ENCODE measurements at regions of chr5 and their contacts with region 1.

Region 1: DNA sequence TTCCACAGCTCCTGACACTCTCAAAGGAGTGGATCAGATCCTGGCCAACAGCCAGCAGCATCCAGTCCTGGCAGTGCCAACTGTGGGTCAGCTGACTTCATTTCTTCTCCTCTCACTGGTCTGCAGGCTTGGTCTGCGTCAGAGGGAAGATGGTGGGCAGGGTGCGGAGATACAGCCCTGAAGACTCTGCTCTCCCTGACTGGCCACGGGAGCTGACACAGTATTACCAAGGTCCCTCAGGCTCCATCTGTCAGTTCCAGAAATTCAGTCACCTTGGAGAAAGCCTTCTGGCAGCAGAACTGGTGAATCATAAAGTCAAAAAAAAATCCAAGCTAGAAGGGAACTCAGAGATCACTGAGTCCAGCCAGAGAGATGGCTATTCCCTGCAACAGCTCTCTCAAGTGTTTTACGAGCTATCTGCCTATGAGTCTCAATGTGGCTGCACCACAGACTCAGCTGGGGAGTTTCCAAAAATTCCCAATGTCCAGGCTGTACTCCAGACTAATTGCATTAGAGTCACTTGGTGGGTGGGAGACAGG is 28.0 kb downstream of the C1QTNF2 start:
- DNase-seq: no peak
- ATAC-seq: peak; percentile 25
- H3K4me3 ChIP-seq: no peak overlapping the region
- H3K4me1 ChIP-seq: peaks cover 5% of the 10 kb centered on the region
- CTCF ChIP-seq: no peak

Region 2: DNA sequence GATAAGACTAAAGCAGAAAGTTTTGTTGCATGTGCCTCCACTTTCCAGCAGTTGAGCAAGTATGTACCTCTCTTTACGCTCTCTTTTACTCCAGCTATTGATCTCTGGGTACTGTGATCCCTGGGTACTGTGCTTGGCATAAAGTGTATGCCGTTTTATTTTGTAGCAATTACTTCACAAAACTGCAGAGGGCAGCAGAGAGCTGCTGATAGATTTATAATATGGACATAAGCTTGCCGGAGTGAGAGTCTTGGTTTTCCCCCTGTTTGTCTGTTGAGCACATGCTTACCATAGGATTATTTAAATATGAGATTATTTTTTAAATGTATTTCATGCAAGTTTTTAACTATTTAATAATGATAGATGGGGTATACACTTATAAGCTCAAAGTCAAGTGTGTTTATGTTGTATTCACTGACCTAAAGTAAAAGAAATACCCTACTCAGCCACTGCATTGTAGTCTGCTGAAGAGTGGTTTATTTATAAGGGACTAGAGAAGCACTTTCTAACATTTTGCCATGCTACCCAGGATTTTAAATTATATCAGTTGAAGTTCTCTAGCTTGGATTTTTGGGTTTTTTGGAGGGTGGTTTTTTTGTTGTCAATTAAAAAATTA is 320.5 kb before region 1 on chr5:
- intact Hi-C with region 1: loop called (anchors 2 to 10 kb)
- DNase-seq: peak in 1 of 3 donors; percentile 74
- ATAC-seq: peak; percentile 93
- H3K4me3 ChIP-seq: no peak overlapping the region
- H3K4me1 ChIP-seq: peaks cover 21% of the 10 kb centered on the region
- CTCF ChIP-seq: peak; percentile 69

Region 3: GRCh38 chr5:160165137-160166068 is 177.1 kb before region 1 on chr5:
- intact Hi-C with region 1: no loop called
- DNase-seq: peak; percentile 74 to 88 (median 80)
- ATAC-seq: peak; percentile 86
- H3K4me3 ChIP-seq: no peak overlapping the region
- H3K4me1 ChIP-seq: peaks cover 12% of the 10 kb centered on the region
- CTCF ChIP-seq: no peak

Region 4: GRCh38 chr5:160199410-160199911 is 143.0 kb before region 1 on chr5:
- intact Hi-C with region 1: loop called (anchors 2 to 5 kb)
- DNase-seq: peak; percentile 70 to 87 (median 84)
- ATAC-seq: peak; percentile 99
- H3K4me3 ChIP-seq: no peak overlapping the region
- H3K4me1 ChIP-seq: no peaks in the 10 kb centered on the region
- CTCF ChIP-seq: peak; percentile 95

Region 5: GRCh38 chr5:160399402-160400353 is 57.2 kb after region 1 on chr5 and contains the start of gene FAM200C:
- intact Hi-C with region 1: no loop called
- DNase-seq: peak; percentile 87 to 94 (median 92)
- ATAC-seq: peak; percentile 99
- H3K4me3 ChIP-seq: peak within 1 kb of the TSS; percentile 43
- H3K4me1 ChIP-seq: peaks cover 11% of the 10 kb centered on the region
- CTCF ChIP-seq: no peak
- total RNA-seq, gene FAM200C: 1.7 to 4.3 (median 1.9) TPM